A673 (cell line): ENCODE measurements at regions of chr12 and their contacts with region 1.

Region 1: DNA sequence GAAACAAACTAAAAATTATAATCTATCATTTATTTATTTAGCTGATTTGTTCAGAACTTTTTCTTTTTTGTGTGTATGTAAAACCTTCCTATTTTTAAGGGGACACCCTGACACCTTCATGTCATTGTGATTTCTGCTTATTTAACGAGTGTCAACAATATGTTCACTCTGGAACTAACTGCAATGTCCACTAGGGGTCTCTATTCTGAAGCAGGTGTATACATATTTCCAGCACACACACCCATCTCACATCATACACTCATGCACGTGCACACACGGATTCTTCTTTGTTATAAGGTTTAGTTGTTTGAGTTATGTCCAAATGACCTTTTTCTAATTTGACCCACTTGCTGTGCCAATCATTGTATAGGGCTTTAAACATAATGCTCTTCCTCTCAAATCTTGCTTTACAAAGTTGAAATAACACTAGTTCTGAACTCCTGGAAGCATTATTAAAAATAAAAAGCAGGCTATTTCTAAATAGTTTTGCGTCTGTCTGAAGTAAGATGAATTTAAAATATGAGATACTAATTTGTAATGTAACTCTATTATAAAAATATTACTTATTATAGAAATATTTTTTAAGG is 15.5 kb downstream of the E2F7 start:
- DNase-seq: peak; percentile 78
- H3K4me3 ChIP-seq: no peak overlapping the region
- H3K27ac ChIP-seq: no peak overlapping the region
- H3K4me1 ChIP-seq: no peaks in the 10 kb centered on the region
- H3K27me3 ChIP-seq: no peaks in the 10 kb centered on the region
- CTCF ChIP-seq: peak; percentile 83

Region 2: DNA sequence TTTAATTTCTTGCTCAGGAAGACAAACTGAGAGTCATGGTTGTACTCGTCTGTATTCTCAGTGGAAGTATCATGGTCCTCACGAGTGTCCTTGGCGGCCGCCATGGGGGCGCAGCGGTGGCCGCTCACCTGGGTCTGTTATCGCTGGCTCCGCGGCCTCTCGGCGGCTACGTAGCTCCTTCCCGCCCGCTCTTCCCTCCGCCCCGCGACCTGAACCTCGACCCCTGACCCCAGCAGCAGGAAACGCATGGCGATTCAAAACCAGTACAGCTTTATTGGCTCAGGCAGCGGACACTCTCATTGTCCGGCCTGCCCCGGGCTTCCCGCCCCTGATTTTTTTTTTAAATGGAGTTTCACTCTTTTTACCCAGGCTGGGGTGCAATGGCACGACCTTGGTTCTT is 65.3 kb before region 1 on chr12:
- CTCF ChIA-PET with region 1: no interaction called
- POLR2A ChIA-PET with region 1: no interaction called
- intact Hi-C with region 1: no loop called
- DNase-seq: no peak
- H3K4me3 ChIP-seq: no peak overlapping the region
- H3K27ac ChIP-seq: no peak overlapping the region
- H3K4me1 ChIP-seq: peaks cover 10% of the 10 kb centered on the region
- H3K27me3 ChIP-seq: no peaks in the 10 kb centered on the region
- CTCF ChIP-seq: no peak

Region 3: GRCh38 chr12:77932216-77932615 is 882.4 kb after region 1 on chr12:
- CTCF ChIA-PET with region 1: no interaction called
- POLR2A ChIA-PET with region 1: no interaction called
- intact Hi-C with region 1: loop called (anchors 10 kb)
- DNase-seq: peak; percentile 55
- H3K4me3 ChIP-seq: no peak overlapping the region
- H3K27ac ChIP-seq: no peak overlapping the region
- H3K4me1 ChIP-seq: no peaks in the 10 kb centered on the region
- H3K27me3 ChIP-seq: no peaks in the 10 kb centered on the region
- CTCF ChIP-seq: peak; percentile 60